Activated T-helper 2 cell treated with anti-CD3 and anti-CD28 coated beads, Interferon-gamma antibody, Interleukin-2, Interleukin-4, amounts not matched to agents 10 μg/mL and 5 μg/mL and 100 μg/mL, durations not matched to agents 14 hours and 24 hours and 36 hours (primary cell): ENCODE measurements at regions of chr7 and their contacts with region 1.

Region 1: DNA sequence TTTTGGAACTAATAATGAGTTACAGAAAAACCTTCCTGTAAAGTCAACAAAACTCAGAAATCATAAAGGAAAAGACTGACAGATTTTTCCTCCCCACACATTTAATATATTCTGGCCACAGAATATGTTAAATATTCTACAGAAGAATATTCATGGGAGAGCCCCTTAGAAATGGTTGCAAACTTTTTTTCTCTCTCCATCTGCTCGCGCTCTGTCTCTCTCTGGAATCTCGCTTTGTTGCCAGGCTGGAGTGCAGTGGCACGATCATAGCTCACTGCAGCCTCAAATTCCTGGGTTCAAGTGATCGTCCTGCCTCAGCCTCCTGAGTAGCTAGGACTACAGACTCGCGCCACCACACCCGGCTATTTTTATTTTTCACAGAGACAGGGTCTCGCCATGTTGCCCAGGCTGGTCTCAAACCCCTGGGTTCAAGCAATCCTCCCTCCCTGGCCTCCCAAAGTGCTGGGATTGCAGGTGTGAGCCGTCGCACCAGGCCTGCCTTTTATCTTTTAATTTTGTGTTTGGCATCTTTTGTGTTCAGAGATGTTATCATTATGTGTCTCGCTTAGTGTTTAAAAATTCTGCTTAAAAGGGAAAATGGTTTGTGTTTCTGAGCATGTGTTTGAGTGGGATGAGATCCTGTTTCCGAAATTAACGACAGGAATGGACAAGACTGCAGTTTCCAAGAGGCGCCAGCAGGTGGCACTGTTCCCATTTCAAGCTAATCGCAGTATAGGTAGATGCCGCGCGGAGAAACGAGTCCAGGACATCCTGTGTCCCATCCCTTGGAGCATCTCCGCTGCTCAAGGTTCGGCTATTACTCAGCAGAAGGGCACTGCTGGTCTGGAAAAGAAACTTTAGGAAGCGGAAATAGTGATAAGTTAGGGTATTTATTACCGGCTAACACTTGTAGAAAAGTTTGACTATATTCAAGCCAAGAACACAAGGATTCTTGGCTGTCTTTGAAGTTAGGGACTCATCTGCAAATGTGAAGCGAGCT is 23.1 kb upstream of the ST7 start:
- DNase-seq: peak; percentile 54
- H3K4me3 Mint-ChIP-seq: no peak overlapping the region
- H3K27ac Mint-ChIP-seq: no peak overlapping the region
- H3K4me1 Mint-ChIP-seq: peaks cover 1% of the 10 kb centered on the region
- H3K27me3 Mint-ChIP-seq: peaks cover 10% of the 10 kb centered on the region

Region 2: GRCh38 chr7:116661865-116662264 is 268.3 kb before region 1 on chr7:
- intact Hi-C with region 1: no loop called
- DNase-seq: no peak
- H3K4me3 Mint-ChIP-seq: no peak overlapping the region
- H3K27ac Mint-ChIP-seq: no peak overlapping the region
- H3K4me1 Mint-ChIP-seq: no peaks in the 10 kb centered on the region
- H3K27me3 Mint-ChIP-seq: peaks cover 28% of the 10 kb centered on the region

Region 3: DNA sequence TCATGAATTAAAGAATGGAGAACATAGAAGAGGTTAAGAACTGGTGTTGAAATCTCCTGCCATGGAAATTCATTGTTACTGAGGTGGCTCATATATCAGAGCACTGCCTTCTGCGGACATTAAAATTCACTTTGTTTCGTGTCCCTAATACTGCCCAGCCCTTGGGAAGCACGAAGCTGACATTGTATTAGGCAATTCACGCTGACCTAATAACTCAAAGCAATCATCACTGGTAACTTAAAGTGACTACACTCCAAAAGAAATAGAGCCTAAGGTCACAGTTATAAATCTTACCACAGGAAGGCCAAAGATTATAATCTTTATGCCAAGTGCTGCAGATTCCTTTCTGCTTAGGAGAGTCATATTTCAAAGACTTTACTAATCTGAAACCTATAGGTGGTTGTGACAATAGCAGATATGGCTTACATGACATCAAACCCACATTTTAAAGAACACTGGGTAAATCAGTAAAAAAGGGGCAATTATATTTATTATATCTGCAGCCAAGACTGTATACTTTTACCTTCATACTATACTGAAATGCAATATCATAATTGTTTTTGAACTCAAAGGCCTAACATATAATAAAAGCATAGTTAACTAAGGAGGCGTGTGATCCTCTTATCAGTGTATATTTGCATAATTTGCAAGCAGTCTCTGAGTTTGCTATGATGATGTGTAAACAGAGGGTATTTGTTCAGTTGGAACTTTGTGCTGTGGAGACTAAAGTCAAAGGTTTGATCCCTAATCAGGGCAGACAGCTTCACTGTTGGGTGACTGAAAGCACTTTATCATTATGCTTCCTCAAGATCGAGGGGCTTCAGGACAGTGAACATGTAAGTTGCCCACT is 119.7 kb before region 1 on chr7:
- intact Hi-C with region 1: no loop called
- DNase-seq: no peak
- H3K4me3 Mint-ChIP-seq: no peak overlapping the region
- H3K27ac Mint-ChIP-seq: no peak overlapping the region
- H3K4me1 Mint-ChIP-seq: peaks cover 3% of the 10 kb centered on the region
- H3K27me3 Mint-ChIP-seq: peaks cover 18% of the 10 kb centered on the region

Region 4: DNA sequence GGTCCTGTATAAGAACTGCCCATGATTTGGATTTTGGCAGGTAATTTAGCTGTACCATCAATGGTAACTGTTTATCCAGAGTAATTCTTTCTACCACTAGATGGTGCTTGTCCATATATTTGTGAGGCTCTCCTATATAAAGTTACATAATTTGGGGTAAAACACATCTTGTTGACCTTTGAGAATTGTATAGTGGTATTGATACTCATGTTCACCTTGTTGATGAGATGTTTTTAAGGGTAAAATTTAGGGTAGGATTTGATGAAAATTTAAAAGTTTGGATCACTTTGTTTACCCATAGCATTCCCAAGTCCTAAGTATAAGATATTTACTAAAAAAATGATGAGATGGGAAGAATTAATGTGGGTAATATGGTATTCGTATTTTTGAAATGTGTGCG is 54.7 kb after region 1 on chr7:
- intact Hi-C with region 1: loop called (anchors 2 kb)
- DNase-seq: no peak
- H3K4me3 Mint-ChIP-seq: no peak overlapping the region
- H3K27ac Mint-ChIP-seq: no peak overlapping the region
- H3K4me1 Mint-ChIP-seq: peaks cover 2% of the 10 kb centered on the region
- H3K27me3 Mint-ChIP-seq: peaks cover 1% of the 10 kb centered on the region

Region 5: DNA sequence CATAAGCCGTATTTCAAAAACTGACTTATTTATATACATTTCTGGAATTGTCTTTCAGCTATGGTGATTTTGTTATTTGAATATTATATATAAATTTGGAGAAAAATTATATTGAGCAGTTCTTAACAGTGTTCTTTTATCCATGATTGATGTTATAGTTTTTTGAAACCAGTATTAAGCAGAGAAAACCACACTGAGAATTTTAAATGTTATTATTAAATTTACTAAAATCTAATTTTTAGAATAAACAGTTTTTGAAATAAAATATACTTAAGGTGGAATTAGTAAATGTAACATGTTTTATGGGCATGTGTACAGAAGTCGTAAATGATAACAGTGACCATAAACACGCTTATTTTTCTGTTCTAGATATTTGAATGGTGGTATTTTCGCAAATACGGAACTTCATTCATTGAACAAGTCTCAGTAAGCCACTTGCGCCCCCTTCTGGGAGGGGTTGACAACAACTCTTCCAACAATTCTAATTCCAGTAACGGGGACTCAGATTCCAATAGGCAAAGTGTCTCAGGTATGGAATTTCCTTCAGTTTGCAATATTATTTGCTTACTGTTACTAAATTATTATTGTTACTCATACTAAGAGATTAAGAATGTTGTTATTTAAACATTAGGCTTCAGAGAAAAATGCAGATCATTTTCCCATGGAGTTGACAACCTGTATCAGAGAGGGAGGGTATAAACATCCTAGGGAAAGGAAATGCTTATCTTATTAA is 189.1 kb after region 1 on chr7:
- intact Hi-C with region 1: loop called (anchors 2 kb)
- DNase-seq: peak; percentile 56
- H3K4me3 Mint-ChIP-seq: no peak overlapping the region
- H3K27ac Mint-ChIP-seq: no peak overlapping the region
- H3K4me1 Mint-ChIP-seq: peaks cover 5% of the 10 kb centered on the region
- H3K27me3 Mint-ChIP-seq: peaks cover 16% of the 10 kb centered on the region

Region 6: DNA sequence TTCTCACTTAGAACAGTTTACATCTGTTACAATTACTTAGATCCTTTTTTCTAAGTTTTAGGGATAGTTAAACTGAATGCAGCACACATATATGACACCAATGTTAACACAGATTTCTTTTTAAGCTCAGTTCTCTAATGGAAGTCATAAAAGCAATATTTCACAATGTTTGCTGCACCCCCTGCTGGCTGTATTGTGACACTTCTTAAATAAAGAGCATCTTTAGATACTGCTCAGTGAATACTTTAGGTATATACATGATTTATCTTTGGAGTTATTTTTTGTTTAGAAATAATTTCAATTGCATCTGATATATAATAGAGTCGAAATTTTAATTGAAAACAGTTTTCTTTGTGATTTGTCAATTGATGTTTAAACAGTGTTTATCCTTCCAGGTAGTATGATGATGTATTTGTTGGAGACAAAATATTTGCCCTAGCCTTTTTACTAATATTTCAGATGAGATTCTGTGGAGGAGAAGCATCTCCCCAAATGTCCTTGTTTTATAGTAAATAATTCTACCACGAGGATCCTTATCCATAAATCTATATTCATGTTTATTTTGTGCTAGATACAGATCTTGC is 197.5 kb after region 1 on chr7:
- intact Hi-C with region 1: loop called (anchors 1 kb)
- DNase-seq: no peak
- H3K4me3 Mint-ChIP-seq: no peak overlapping the region
- H3K27ac Mint-ChIP-seq: no peak overlapping the region
- H3K4me1 Mint-ChIP-seq: peaks cover 22% of the 10 kb centered on the region
- H3K27me3 Mint-ChIP-seq: peaks cover 2% of the 10 kb centered on the region

Region 7: DNA sequence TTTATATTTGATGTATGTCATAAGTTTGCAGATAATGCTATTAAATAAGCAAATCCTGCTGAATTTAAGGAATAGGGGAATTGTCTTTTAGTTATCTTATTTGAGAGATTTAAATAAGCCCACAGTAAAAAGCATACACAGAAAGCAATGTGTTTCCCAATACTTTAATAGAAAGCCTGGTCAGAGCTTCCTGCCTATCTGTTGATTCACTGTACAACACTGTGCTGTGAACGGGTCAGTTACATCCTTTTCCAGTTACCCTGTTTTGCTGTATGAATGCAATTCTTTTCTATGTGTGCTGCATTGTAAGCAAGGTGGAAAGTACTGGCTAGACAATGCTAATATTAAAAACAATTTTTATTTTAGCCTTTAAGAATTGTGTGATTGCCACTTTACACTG is 1375.5 kb after region 1 on chr7:
- intact Hi-C with region 1: no loop called
- DNase-seq: no peak
- H3K4me3 Mint-ChIP-seq: no peak overlapping the region
- H3K27ac Mint-ChIP-seq: no peak overlapping the region
- H3K4me1 Mint-ChIP-seq: peaks cover 7% of the 10 kb centered on the region
- H3K27me3 Mint-ChIP-seq: peaks cover 17% of the 10 kb centered on the region